Right cardiac atrium (tissue), 5 donors: ENCODE measurements at regions of chr6 and their contacts with region 1.

Region 1: GRCh38 chr6:39102071-39102820 is 12.7 kb downstream of the SAYSD1 start:
- DNase-seq: peak; percentile 52 to 71 (median 71)
- ATAC-seq: peak; percentile 76 to 77
- H3K4me3 ChIP-seq: no peak overlapping the region
- H3K27ac ChIP-seq: no peak overlapping the region
- H3K4me1 ChIP-seq: no peaks in the 10 kb centered on the region
- H3K27me3 ChIP-seq: no peaks in the 10 kb centered on the region

Region 2: DNA sequence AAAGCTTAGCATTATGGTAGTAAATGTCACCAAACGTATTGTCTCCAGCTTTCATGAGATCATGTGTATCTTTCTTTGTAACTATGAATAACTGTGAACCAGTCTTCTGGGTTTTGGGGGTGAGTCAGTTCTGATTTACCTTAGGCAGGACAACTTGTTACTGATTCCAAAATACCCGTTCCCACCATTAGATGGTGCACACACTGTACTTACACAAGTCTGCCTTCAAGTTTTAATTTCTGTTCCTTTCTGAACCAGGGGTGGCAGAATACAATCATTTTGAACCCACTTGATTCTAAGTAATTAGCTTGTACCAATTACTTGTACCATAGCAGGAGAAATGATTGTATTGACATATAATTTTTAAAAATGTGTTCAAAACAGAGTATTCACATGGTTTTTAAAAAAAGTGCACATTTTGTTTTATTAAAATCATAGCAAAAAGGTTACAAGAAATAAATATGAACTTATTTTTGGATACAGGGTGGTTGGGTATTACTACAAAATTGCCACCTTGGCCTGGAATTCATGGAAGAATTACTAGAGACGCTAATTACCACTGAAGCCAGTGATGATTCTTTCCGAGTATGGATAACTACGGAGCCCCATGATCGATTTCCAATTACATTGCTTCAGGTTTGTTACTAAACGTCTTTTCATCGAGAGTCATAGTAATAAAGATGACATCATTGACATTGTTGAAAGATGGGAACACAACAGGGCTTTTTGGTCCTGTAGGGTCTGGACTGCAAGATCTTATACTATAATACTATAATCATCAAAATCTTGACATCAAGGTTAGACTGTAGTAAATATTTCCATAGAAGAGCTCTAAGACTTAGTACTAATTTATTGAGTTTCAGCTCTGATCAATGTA is 128.8 kb before region 1 on chr6:
- intact Hi-C with region 1: loop called in 1 of 4 experiments (anchors 10 kb)
- DNase-seq: no peak
- ATAC-seq: peak; percentile 62 to 71
- H3K4me3 ChIP-seq: no peak overlapping the region
- H3K27ac ChIP-seq: no peak overlapping the region
- H3K4me1 ChIP-seq: no peaks in the 10 kb centered on the region
- H3K27me3 ChIP-seq: no peaks in the 10 kb centered on the region

Region 3: GRCh38 chr6:39051399-39052122 is 50.7 kb before region 1 on chr6:
- intact Hi-C with region 1: no loop called
- DNase-seq: no peak
- ATAC-seq: no peak
- H3K4me3 ChIP-seq: no peak overlapping the region
- H3K27ac ChIP-seq: no peak overlapping the region
- H3K4me1 ChIP-seq: no peaks in the 10 kb centered on the region
- H3K27me3 ChIP-seq: no peaks in the 10 kb centered on the region